H1 (cell line): ENCODE measurements at regions of chr1 and their contacts with region 1.

Region 1: GRCh38 chr1:180415985-180416633 is 86.3 kb downstream of the ACBD6 start:
- DNase-seq: no peak
- H3K4me3 ChIP-seq: no peak overlapping the region
- H3K27ac ChIP-seq: no peak overlapping the region
- H3K4me1 ChIP-seq: no peaks in the 10 kb centered on the region
- H3K27me3 ChIP-seq: no peaks in the 10 kb centered on the region
- CTCF ChIP-seq: peak in 2 of 3 experiments; percentile 39 to 63; a peak in 2 of 4 replicates
- EP300 ChIP-seq: no peak
- POLR2A ChIP-seq: no peak
- RAD21 ChIP-seq: peak; percentile 79 to 84

Region 2: GRCh38 chr1:180262572-180263488 is 153.3 kb before region 1 on chr1:
- CTCF ChIA-PET with region 1: interaction called, 22 read pairs
- POLR2A ChIA-PET with region 1: no interaction called
- DNase-seq: no peak
- H3K4me3 ChIP-seq: no peak overlapping the region
- H3K27ac ChIP-seq: no peak overlapping the region
- H3K4me1 ChIP-seq: peaks cover 0 to 13% (median 4%) of the 10 kb centered on the region in 4 experiments; a peak in 6 of 7 replicates
- H3K27me3 ChIP-seq: no peaks in the 10 kb centered on the region; a peak in 1 of 7 replicates
- CTCF ChIP-seq: no peak
- EP300 ChIP-seq: no peak
- POLR2A ChIP-seq: no peak
- RAD21 ChIP-seq: no peak

Region 3: GRCh38 chr1:180435566-180435965 is 19.5 kb after region 1 on chr1:
- CTCF ChIA-PET with region 1: interaction called, 14 read pairs
- POLR2A ChIA-PET with region 1: interaction called, 3 read pairs
- DNase-seq: no peak
- H3K4me3 ChIP-seq: no peak overlapping the region
- H3K27ac ChIP-seq: no peak overlapping the region
- H3K4me1 ChIP-seq: peaks cover 2 to 9% (median 7%) of the 10 kb centered on the region in 4 experiments; a peak in 4 of 7 replicates
- H3K27me3 ChIP-seq: no peaks in the 10 kb centered on the region
- CTCF ChIP-seq: no peak
- EP300 ChIP-seq: no peak
- POLR2A ChIP-seq: no peak
- RAD21 ChIP-seq: no peak

Region 4: GRCh38 chr1:180571832-180572636 is 155.9 kb after region 1 on chr1:
- CTCF ChIA-PET with region 1: no interaction called
- POLR2A ChIA-PET with region 1: no interaction called
- DNase-seq: no peak
- H3K4me3 ChIP-seq: no peak overlapping the region
- H3K27ac ChIP-seq: no peak overlapping the region
- H3K4me1 ChIP-seq: no peaks in the 10 kb centered on the region
- H3K27me3 ChIP-seq: no peaks in the 10 kb centered on the region
- CTCF ChIP-seq: no peak
- EP300 ChIP-seq: no peak
- POLR2A ChIP-seq: no peak
- RAD21 ChIP-seq: no peak